ENCODE measurements at regions of chr20 and their contacts with region 1.

Region 1: GRCh38 chr20:11646359-11646758 is 271.3 kb upstream of the BTBD3 start:
- DNase-seq: no peak
- H3K4me3 ChIP-seq: no peak overlapping the region
- H3K27ac ChIP-seq: no peak overlapping the region
- H3K4me1 ChIP-seq: no peaks in the 10 kb centered on the region
- H3K27me3 ChIP-seq: no peaks in the 10 kb centered on the region
- CTCF ChIP-seq: no peak
- POLR2A ChIP-seq: no peak

Region 2: GRCh38 chr20:11585752-11586352 is 60.5 kb before region 1 on chr20:
- intact Hi-C with region 1: no loop called
- DNase-seq: no peak
- H3K4me3 ChIP-seq: no peak overlapping the region
- H3K27ac ChIP-seq: no peak overlapping the region
- H3K4me1 ChIP-seq: no peaks in the 10 kb centered on the region
- H3K27me3 ChIP-seq: no peaks in the 10 kb centered on the region
- CTCF ChIP-seq: no peak
- POLR2A ChIP-seq: no peak

Region 3: DNA sequence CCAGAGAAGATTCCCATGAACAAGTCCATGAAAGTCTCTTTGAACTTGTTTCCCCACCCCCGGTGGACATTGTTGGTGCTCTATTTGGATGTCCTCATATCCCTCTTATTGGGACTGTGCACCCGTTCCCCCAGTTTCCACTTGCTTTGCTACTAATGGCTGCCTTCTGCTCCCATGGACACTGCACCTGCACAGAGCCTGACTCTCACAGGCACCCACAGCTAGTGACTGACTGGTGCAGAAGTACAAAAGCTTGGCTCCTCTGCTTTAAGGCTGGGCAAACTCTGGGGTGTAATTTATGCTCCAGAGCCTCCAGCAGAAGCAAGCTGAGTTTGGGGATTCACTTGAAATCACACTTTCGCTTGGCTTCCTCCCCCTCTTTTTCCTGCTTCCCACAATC is 31.5 kb after region 1 on chr20:
- intact Hi-C with region 1: loop called (anchors 2 kb)
- DNase-seq: no peak
- H3K4me3 ChIP-seq: no peak overlapping the region
- H3K27ac ChIP-seq: no peak overlapping the region
- H3K4me1 ChIP-seq: no peaks in the 10 kb centered on the region
- H3K27me3 ChIP-seq: no peaks in the 10 kb centered on the region
- CTCF ChIP-seq: no peak
- POLR2A ChIP-seq: no peak

Region 4: GRCh38 chr20:11766976-11767375 is 120.6 kb after region 1 on chr20:
- intact Hi-C with region 1: no loop called
- DNase-seq: no peak
- H3K4me3 ChIP-seq: no peak overlapping the region
- H3K27ac ChIP-seq: no peak overlapping the region
- H3K4me1 ChIP-seq: no peaks in the 10 kb centered on the region
- H3K27me3 ChIP-seq: no peaks in the 10 kb centered on the region
- CTCF ChIP-seq: no peak
- POLR2A ChIP-seq: no peak